PC-9 (cell line): ENCODE measurements at regions of chr7 and their contacts with region 1.

Region 1: GRCh38 chr7:15720849-15721471 is 34.5 kb upstream of the MEOX2 start:
- DNase-seq: peak in 1 of 2 experiments; percentile 18
- H3K4me3 ChIP-seq: no peak overlapping the region
- H3K27ac ChIP-seq: no peak overlapping the region
- H3K4me1 ChIP-seq: no peaks in the 10 kb centered on the region
- H3K27me3 ChIP-seq: no peaks in the 10 kb centered on the region
- CTCF ChIP-seq: peak; percentile 95

Region 2: DNA sequence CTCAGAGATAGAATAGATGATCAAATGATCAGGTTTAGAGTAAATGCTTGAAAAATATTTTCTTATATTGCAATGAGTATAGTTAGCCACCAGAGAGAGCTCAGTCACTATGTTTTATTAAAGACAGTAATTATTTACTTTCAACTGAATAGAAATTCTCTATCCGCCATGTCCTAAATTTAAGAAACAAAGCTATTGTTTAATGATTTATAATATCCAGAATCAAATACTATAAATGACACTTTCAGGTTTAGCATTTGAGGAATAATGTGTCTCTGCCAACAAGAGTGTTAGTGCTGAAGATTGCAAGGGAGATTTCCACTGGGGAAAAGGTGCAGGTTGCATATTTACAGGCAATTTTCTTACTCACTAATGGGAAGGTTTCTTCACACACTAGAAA is 1003.1 kb before region 1 on chr7:
- CTCF ChIA-PET with region 1: no interaction called
- POLR2A ChIA-PET with region 1: interaction called, 5 read pairs
- intact Hi-C with region 1: loop called (anchors 5 kb)
- DNase-seq: no peak
- H3K4me3 ChIP-seq: no peak overlapping the region
- H3K27ac ChIP-seq: no peak overlapping the region
- H3K4me1 ChIP-seq: no peaks in the 10 kb centered on the region
- H3K27me3 ChIP-seq: no peaks in the 10 kb centered on the region
- CTCF ChIP-seq: peak; percentile 77

Region 3: GRCh38 chr7:15305002-15305600 is 415.9 kb before region 1 on chr7:
- CTCF ChIA-PET with region 1: interaction called, 4 read pairs
- POLR2A ChIA-PET with region 1: no interaction called
- intact Hi-C with region 1: loop called (anchors 2 kb)
- DNase-seq: peak; percentile 46 to 50
- H3K4me3 ChIP-seq: no peak overlapping the region
- H3K27ac ChIP-seq: no peak overlapping the region
- H3K4me1 ChIP-seq: no peaks in the 10 kb centered on the region
- H3K27me3 ChIP-seq: no peaks in the 10 kb centered on the region
- CTCF ChIP-seq: peak; percentile 86

Region 4: DNA sequence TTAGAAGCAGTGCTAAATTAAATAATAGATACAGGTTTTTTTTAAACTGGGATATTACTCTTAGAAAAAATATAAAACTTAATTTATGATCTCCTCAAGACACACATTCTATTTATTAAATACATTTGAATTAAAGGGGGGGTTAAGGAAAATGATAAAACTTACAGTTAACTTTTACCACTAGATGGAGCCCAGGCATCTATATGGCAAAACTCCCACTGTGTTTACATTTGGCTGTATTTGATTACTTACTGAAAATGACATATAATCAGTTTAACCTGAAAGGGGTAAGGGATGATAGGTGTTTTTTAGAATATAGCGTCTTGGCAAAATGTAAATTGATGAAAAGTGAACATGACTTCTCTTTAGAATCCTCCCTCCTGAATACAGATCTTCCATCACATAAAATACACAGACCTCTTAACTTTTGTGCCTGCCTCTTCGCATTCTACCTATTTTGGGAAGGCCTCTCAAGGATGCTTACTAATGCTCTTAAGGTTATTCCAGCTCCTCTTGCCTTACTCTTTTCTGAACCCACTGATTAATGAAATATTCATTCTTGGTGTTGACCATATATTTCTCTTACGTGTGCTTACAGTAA is 394.8 kb before region 1 on chr7:
- CTCF ChIA-PET with region 1: interaction called, 3 read pairs
- POLR2A ChIA-PET with region 1: no interaction called
- intact Hi-C with region 1: loop called (anchors 1 kb)
- DNase-seq: no peak
- H3K4me3 ChIP-seq: no peak overlapping the region
- H3K27ac ChIP-seq: no peak overlapping the region
- H3K4me1 ChIP-seq: no peaks in the 10 kb centered on the region
- H3K27me3 ChIP-seq: no peaks in the 10 kb centered on the region
- CTCF ChIP-seq: peak; percentile 77

Region 5: GRCh38 chr7:15972862-15973275 is 251.9 kb after region 1 on chr7:
- CTCF ChIA-PET with region 1: no interaction called
- POLR2A ChIA-PET with region 1: no interaction called
- intact Hi-C with region 1: no loop called
- DNase-seq: no peak
- H3K4me3 ChIP-seq: no peak overlapping the region
- H3K27ac ChIP-seq: no peak overlapping the region
- H3K4me1 ChIP-seq: no peaks in the 10 kb centered on the region
- H3K27me3 ChIP-seq: no peaks in the 10 kb centered on the region
- CTCF ChIP-seq: no peak

Region 6: GRCh38 chr7:16071246-16071857 is 350.4 kb after region 1 on chr7:
- CTCF ChIA-PET with region 1: interaction called, 4 read pairs
- POLR2A ChIA-PET with region 1: no interaction called
- intact Hi-C with region 1: loop called (anchors 1 kb)
- DNase-seq: peak; percentile 16 to 57
- H3K4me3 ChIP-seq: no peak overlapping the region
- H3K27ac ChIP-seq: no peak overlapping the region
- H3K4me1 ChIP-seq: no peaks in the 10 kb centered on the region
- H3K27me3 ChIP-seq: no peaks in the 10 kb centered on the region
- CTCF ChIP-seq: peak; percentile 95

Region 7: GRCh38 chr7:16171928-16172327 is 451.0 kb after region 1 on chr7:
- CTCF ChIA-PET with region 1: no interaction called
- POLR2A ChIA-PET with region 1: no interaction called
- intact Hi-C with region 1: loop called (anchors 5 kb)
- DNase-seq: no peak
- H3K4me3 ChIP-seq: no peak overlapping the region
- H3K27ac ChIP-seq: no peak overlapping the region
- H3K4me1 ChIP-seq: no peaks in the 10 kb centered on the region
- H3K27me3 ChIP-seq: no peaks in the 10 kb centered on the region
- CTCF ChIP-seq: no peak